Lower leg skin (tissue), 4 donors: ENCODE measurements at regions of chr5 and their contacts with region 1.

Region 1: DNA sequence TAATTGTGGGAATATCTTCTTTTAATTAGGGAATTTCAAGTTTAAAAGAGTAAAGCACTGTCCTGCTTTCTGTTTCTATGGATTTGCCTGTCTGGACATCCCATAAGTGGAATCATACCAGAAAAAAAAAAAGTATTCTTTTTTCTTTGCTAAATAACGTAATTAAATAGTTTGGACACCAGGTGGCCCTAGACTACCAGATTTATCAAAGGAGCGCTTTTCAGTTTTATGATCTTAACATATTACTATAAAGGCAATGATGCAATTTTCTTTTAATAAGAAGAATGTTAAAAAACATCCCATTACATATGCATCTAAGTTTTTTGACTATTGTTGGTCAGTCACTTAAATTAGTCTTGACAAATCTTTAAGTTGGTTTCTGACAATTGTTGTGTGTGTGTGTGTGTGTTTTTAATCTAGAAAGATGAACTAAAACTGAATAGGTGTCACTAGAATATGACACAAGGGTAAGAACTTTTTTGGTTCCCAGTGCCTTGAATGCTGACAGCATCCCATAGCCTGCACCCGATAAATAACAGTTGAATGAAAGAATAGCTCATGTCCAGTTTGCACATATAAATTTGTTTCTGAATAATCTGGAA is 49.5 kb downstream of the C5orf22 start:
- DNase-seq: no peak
- H3K4me3 ChIP-seq: no peak overlapping the region
- CTCF ChIP-seq: no peak
- POLR2A ChIP-seq: no peak

Region 2: GRCh38 chr5:31531888-31532710 is 49.5 kb before region 1 on chr5 and contains the starts of genes C5orf22 and DROSHA:
- intact Hi-C with region 1: no loop called
- DNase-seq: peak; percentile 93 to 98
- H3K4me3 ChIP-seq: peak within 1 kb of the TSS; percentile 76
- CTCF ChIP-seq: no peak
- POLR2A ChIP-seq: no peak
- total RNA-seq, gene C5orf22: 8.9 to 15.6 (median 12.2) TPM
- total RNA-seq, gene DROSHA: 21.7 to 59.2 (median 37.3) TPM

Region 3: GRCh38 chr5:31800351-31800750 is 218.8 kb after region 1 on chr5:
- intact Hi-C with region 1: loop called (anchors 5 kb)
- DNase-seq: no peak
- H3K4me3 ChIP-seq: no peak overlapping the region
- CTCF ChIP-seq: no peak
- POLR2A ChIP-seq: no peak

Region 4: DNA sequence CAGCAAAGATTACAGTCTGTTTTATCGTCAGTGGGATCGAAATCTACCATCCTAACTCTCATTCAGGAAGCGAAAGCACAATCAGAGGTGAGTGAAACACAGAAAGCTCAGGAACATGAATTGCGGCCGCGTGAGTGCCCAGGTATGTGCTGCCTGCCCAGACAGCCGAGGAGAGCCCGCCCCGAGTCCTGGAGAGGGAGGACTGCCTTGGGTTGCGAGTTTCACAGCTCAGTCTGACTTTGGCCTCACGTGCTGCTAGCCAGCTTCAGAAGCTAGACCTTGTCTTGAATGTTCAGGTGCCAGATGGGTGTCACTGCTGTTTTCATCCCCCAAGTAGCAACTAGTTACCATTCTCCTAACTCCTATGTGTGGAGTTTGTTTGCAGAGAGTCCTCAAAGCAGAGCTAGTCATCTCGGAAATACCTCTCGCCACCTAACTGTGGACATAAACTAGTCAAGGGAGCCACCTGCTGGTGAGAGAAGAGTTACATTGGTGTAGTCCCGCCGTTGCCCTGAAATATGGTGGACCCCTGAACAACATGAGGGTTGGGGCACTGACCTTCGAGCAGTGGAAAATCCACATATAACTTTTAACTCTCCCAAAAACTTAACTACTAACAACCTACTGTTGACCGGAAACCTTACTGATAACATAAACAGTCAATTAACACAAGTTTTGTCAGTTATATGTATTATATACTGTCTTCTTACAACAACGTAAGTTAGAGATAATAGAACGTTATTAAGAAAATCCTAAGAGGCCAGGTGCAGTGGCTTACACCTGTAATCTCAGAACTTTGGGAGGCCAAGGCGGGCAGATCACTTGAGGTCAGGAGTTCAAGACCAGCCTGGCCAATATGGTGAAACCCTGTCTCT is 511.6 kb after region 1 on chr5:
- intact Hi-C with region 1: loop called (anchors 10 kb)
- DNase-seq: peak; percentile 61 to 83
- H3K4me3 ChIP-seq: no peak overlapping the region
- CTCF ChIP-seq: peak in 1 of 3 donors; percentile 32
- POLR2A ChIP-seq: no peak